Heart left ventricle (tissue), 16 donors: ENCODE measurements at regions of chr15 and their contacts with region 1.

Region 1: GRCh38 chr15:41043276-41043951 is 72.7 kb downstream of the INO80 start:
- DNase-seq: no peak
- ATAC-seq: no peak
- H3K4me3 ChIP-seq: no peak overlapping the region
- H3K27ac ChIP-seq: no peak overlapping the region
- H3K4me1 ChIP-seq: peaks cover 0 to 2% (median 0%) of the 10 kb centered on the region in 12 donors
- H3K27me3 ChIP-seq: no peaks in the 10 kb centered on the region
- CTCF ChIP-seq: no peak
- POLR2A ChIP-seq: no peak

Region 2: DNA sequence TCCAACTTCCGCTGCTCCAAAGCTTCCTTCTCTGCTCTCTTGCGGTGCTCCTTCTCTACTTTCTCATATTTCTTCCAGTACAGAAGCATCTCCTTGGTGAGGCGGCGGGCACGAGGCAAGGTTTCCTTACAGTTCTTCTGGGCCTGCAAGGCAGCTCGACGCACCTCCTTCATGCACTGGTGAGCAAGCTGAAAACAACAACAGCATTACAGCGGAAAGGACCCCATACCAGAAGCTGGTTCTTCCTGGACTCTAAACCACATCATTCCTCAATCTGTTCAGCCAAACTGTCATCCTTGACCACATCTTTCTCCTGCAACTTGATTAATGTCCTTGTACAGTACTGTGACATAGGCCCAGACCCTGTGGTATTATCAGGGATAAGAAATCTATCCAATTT is 36.3 kb after region 1 on chr15:
- intact Hi-C with region 1: loop called in 1 of 10 experiments (anchors 5 kb)
- DNase-seq: no peak
- ATAC-seq: no peak
- H3K4me3 ChIP-seq: no peak overlapping the region
- H3K27ac ChIP-seq: no peak overlapping the region
- H3K4me1 ChIP-seq: no peaks in the 10 kb centered on the region
- H3K27me3 ChIP-seq: no peaks in the 10 kb centered on the region
- CTCF ChIP-seq: no peak
- POLR2A ChIP-seq: no peak

Region 3: DNA sequence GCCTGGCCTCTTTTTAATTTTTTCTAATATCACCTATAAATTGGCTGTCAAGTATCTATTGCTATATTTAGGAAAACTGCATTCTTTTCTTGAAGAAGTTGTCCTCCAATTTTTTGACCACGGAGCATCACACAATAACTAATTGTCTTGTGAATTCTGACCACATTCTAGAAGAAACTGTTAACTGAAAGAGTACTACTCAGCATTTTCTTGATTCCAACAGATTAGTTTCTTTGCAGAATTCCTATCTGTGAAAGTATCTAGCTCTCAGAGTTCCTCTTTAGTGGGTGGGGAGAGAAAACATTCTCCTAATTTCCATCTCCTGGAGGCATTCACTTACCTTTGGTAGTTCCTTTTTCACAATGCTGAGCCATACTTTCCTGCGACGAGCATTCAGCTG is 41.6 kb after region 1 on chr15:
- intact Hi-C with region 1: loop called in 2 of 10 experiments (anchors 5 kb)
- DNase-seq: no peak
- ATAC-seq: no peak
- H3K4me3 ChIP-seq: no peak overlapping the region
- H3K27ac ChIP-seq: no peak overlapping the region
- H3K4me1 ChIP-seq: peaks cover 0 to 5% (median 0%) of the 10 kb centered on the region in 12 donors
- H3K27me3 ChIP-seq: no peaks in the 10 kb centered on the region
- CTCF ChIP-seq: no peak
- POLR2A ChIP-seq: no peak